A549 (cell line): ENCODE measurements at regions of chr11 and their contacts with region 1.

Region 1: DNA sequence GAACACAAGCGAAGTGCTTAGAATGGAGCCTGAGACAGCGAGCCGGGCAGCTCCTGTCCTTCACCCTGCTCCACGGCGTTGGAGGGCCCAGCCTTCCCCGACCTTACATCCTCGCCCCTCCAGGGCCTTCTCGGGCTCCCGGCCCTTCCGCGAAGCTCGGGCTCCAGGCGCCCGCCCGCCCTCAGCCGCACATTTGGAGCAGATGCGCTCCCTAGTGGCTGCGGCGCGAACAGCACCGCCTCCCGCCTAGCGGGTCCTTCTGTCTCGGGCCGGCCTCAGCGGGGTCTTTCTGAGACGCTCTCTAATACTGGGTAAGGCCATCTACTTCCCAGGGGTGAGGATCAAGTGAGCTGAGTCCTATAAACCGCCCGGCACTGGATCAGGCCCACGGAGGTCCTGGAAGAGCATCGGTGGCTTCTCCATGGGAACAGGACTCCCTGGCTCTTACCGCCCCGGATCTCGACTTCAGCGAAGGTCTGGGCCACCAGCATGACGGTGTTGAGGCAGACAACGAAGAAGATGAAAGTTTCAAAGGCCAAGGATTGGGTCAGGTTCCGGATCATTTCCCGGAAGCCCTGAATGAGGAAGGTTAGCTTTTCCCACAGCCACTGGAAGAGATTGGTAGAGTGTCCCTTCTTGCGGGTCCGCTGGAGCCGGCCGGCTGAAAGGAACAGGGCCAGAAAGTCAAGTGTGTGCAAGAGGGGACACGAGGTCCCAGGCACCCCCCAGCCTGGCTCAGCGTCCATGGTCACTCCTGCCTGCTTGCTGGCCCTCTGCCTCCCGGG is 3.7 kb downstream of the CATSPER1 start:
- DNase-seq: peak; percentile 72 to 82
- ATAC-seq: peak; percentile 78 to 92
- H3K4me3 ChIP-seq: peak overlapping the region; percentile 33
- H3K27ac ChIP-seq: peak overlapping the region; percentile 50 to 77
- H3K4me1 ChIP-seq: peaks cover 12% of the 10 kb centered on the region
- CTCF ChIP-seq: peak; percentile 84
- EP300 ChIP-seq: no peak
- POLR2A ChIP-seq: no peak
- RAD21 ChIP-seq: peak; percentile 72 to 75

Region 2: DNA sequence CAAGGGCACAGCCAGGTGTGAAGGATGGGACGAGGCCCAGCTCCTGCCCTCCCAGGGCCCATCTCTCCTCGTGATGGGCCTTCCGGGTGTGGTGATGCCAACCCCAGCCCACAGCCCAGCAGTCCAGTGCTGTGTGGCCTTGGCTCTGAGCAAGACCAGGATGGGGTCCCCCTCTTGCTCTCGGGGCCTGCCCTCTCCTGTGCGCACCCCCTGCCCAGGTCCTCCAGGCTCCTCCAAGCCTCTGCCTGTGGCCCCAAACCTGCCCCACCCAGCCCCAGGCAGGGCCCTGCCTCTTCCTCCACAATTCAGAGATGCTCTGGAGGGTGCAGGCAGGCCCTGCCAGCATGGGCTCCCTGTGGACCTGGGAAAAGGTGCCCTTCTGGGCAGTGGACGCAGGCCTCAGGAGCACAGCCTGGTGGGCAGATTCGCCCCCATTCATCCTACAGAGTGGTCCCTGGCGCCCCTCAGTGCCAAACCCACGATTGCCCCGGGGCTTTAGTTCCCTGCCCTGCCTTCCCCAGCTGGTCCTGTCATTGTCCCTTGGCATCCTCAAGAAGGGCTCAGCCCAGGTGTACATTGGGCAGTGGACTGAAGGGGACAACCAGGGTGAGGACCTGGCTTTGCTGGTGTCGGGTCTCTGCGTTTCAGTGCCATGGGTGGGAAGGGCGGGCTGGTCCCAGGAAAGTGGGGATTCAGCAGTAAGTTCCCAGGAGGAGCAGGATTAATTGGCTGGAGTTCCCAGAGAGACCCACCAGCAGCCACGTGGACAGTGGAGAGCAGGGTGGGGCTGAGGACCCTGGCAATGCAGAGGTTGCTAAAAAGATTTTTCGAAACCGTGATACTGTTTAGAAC is 40.4 kb before region 1 on chr11:
- CTCF ChIA-PET with region 1: interaction called, 11 read pairs
- POLR2A ChIA-PET with region 1: no interaction called
- DNase-seq: no peak
- ATAC-seq: peak; percentile 10 to 31; a peak in 4 of 6 replicates
- H3K4me3 ChIP-seq: no peak overlapping the region
- H3K27ac ChIP-seq: no peak overlapping the region
- H3K4me1 ChIP-seq: no peaks in the 10 kb centered on the region
- CTCF ChIP-seq: no peak
- EP300 ChIP-seq: no peak
- POLR2A ChIP-seq: no peak
- RAD21 ChIP-seq: no peak

Region 3: GRCh38 chr11:66001942-66002647 is 20.5 kb before region 1 on chr11 and contains the starts of genes BANF1 and EIF1AD:
- CTCF ChIA-PET with region 1: interaction called, 121 read pairs
- POLR2A ChIA-PET with region 1: interaction called, 6 read pairs
- DNase-seq: peak; percentile 92 to 99
- ATAC-seq: peak; percentile 85 to 91
- H3K4me3 ChIP-seq: peak within 1 kb of the TSS; percentile 67
- H3K27ac ChIP-seq: peak within 1 kb of the TSS; percentile 91 to 95
- H3K4me1 ChIP-seq: peaks cover 13% of the 10 kb centered on the region; the same call in 2 of the 3 replicates
- CTCF ChIP-seq: no peak
- EP300 ChIP-seq: no peak; a peak in 1 of 5 replicates
- POLR2A ChIP-seq: peak; percentile 92
- RAD21 ChIP-seq: 0 out of 5 replicates have a peak, but pooled peaks of 1 of the 2 experiments have one; percentile 7
- polyA plus RNA-seq, gene BANF1: 385 and 399 TPM in 2 replicates
- polyA plus RNA-seq, gene EIF1AD: 38.6 and 42.0 TPM in 2 replicates

Region 4: DNA sequence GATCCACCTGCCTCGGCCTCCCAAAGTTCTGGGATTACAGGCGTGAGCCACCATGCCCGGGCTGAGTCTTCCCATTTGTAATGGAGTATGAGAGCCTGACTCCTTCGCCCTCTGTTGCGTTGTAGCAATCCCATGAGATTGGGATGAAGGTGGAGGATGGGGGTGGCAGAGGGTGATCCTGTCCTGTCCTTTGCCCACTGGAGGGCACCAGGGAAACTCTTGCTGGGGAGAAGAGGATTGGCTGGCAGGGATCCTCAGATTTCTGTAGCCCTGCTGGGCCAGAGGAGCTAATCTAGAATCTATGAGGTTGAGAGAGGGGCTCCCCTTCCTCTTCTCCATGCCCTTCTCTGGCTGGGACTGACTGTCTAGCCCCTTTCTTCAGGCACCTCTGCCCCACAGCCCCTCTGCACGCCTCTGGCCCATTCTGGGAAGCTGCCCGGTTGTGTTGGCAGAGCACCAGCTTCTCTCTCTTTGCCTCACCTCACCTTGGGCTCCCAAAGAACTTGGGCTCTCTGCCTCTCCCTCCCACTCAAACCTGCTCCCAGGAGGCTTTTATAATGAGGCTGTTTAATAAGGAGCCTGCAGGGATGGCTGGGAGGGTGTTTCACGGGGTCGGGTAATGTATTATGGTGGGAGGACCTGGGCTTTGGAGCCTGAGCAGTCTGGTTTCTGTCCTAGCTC is 13.2 kb after region 1 on chr11:
- CTCF ChIA-PET with region 1: interaction called, 188 read pairs
- POLR2A ChIA-PET with region 1: no interaction called
- DNase-seq: no peak
- ATAC-seq: peak; percentile 44 to 60; a peak in 4 of 6 replicates
- H3K4me3 ChIP-seq: no peak overlapping the region
- H3K27ac ChIP-seq: no peak overlapping the region
- H3K4me1 ChIP-seq: no peaks in the 10 kb centered on the region
- CTCF ChIP-seq: no peak
- EP300 ChIP-seq: no peak
- POLR2A ChIP-seq: no peak
- RAD21 ChIP-seq: peak in 1 of 2 experiments; percentile 3; a peak in 1 of 5 replicates

Region 5: DNA sequence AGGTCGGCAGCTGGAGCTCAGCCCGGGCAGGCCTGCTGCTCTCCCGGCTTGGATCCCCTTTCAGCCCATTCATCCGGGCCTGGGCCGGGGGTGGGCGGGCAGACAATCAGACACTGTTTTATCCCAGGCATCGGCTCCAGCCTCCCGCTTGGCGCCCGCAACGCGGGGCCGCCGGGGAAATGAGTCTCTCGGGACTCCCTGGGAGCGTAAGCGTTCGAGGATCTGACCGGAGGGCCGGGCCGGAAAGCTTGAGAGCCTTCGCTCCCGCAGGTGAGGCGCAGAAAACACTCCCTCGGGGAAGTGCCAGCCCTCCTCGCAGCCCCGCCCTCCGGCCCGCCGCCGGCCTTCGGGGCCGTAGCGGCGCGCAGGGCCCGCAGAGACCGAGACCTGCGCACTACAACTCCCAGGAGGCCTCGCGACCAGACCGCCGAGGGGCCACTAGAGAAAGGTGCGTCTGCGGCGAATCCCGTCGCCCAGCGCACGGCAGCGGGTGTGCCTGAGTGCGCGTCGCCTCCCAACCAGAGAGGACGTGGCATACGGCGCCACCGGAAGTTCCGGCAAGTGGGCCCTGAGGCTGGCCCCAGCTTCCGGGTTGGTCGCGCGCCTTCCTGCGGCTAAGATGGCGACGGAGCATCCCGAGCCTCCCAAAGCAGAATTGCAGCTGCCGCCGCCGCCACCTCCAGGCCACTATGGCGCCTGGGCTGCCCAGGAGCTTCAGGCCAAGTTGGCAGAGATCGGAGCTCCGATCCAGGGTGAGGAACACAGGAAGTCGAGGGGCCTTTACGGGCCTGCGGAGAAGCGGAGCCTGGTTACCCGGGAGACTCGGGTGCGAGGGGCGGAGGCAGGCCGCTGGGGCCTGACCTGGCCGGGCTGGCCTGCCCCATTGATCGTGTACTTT is 29.4 kb after region 1 on chr11 and contains the start of gene SF3B2:
- CTCF ChIA-PET with region 1: interaction called, 188 read pairs
- POLR2A ChIA-PET with region 1: interaction called, 5 read pairs
- DNase-seq: peak; percentile 96 to 99
- ATAC-seq: peak; percentile 97 to 99
- H3K4me3 ChIP-seq: peak within 1 kb of the TSS; percentile 89
- H3K27ac ChIP-seq: peak within 1 kb of the TSS; percentile 92 to 93
- H3K4me1 ChIP-seq: peaks cover 21% of the 10 kb centered on the region
- CTCF ChIP-seq: no peak
- EP300 ChIP-seq: no peak
- POLR2A ChIP-seq: peak; percentile 59
- RAD21 ChIP-seq: no peak
- polyA plus RNA-seq, gene SF3B2: 107 and 108 TPM in 2 replicates